Naive thymus-derived CD4-positive, alpha-beta T cell (primary cell): ENCODE measurements at regions of chr1 and their contacts with region 1.

Region 1: DNA sequence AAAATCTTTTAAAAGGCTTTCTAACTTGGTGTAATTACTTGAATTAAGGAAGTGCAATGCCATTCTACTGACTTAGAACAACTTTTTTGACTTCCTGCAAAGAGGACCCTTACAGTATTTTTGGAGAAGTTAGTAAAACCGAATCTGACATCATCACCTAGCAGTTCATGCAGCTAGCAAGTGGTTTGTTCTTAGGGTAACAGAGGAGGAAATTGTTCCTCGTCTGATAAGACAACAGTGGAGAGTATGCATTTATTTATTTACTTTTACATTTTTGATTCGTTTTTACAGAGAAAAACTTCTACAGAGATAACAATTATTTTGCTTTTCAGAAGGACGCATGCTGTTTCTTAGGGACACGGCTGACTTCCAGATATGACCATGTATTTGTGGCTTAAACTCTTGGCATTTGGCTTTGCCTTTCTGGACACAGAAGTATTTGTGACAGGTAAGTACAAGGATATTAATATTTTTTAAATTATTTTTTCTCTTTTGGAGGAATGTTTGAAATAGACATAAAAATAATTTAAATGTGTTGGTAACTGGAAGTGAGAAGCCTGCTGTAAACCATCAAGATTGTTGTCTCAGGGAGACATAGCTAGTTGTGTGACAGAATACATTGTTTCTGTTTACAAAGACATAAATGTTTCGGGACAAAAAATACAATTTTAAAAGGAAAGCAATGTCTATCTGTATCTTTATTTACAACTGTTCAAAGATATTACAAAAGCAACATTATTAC is at the start of gene PTPRC:
- DNase-seq: peak in 7 of 9 donors; percentile 46 to 78 (median 68)
- ATAC-seq: peak; percentile 81
- H3K4me3 ChIP-seq: peak within 1 kb of the TSS; percentile 81
- H3K4me3 Mint-ChIP-seq: peak within 1 kb of the TSS; percentile 77 to 100 (median 92)
- H3K27ac ChIP-seq: peak within 1 kb of the TSS; percentile 94
- H3K27ac Mint-ChIP-seq: peak within 1 kb of the TSS; percentile 86 to 98 (median 96)
- H3K4me1 ChIP-seq: peaks cover 31 to 40% of the 10 kb centered on the region in 2 donors
- H3K4me1 Mint-ChIP-seq: peaks cover 39 to 60% (median 52%) of the 10 kb centered on the region in 7 donors
- H3K27me3 ChIP-seq: no peaks in the 10 kb centered on the region
- H3K27me3 Mint-ChIP-seq: no peaks in the 10 kb centered on the region
- total RNA-seq, gene PTPRC: 739 to 1,121 (median 1,015) TPM

Region 2: GRCh38 chr1:198497346-198498102 is 141.5 kb before region 1 on chr1:
- CTCF ChIA-PET with region 1: no interaction called
- POLR2A ChIA-PET with region 1: no interaction called
- intact Hi-C with region 1: no loop called
- DNase-seq: no peak
- ATAC-seq: no peak
- H3K4me3 ChIP-seq: no peak overlapping the region
- H3K4me3 Mint-ChIP-seq: no peak overlapping the region
- H3K27ac ChIP-seq: no peak overlapping the region
- H3K27ac Mint-ChIP-seq: no peak overlapping the region
- H3K4me1 ChIP-seq: no peaks in the 10 kb centered on the region
- H3K4me1 Mint-ChIP-seq: peaks cover 0 to 10% (median 0%) of the 10 kb centered on the region in 7 donors
- H3K27me3 ChIP-seq: no peaks in the 10 kb centered on the region
- H3K27me3 Mint-ChIP-seq: no peaks in the 10 kb centered on the region

Region 3: GRCh38 chr1:198520524-198521254 is 118.4 kb before region 1 on chr1:
- CTCF ChIA-PET with region 1: interaction called, 4 read pairs
- POLR2A ChIA-PET with region 1: interaction called, 8 read pairs
- intact Hi-C with region 1: loop called (anchors 1 kb)
- DNase-seq: peak in 3 of 9 donors; percentile 11 to 27 (median 18)
- ATAC-seq: peak; percentile 66
- H3K4me3 ChIP-seq: peak overlapping the region; percentile 44
- H3K4me3 Mint-ChIP-seq: peak overlapping the region; percentile 65 to 79 (median 71)
- H3K27ac ChIP-seq: peak overlapping the region; percentile 81
- H3K27ac Mint-ChIP-seq: peak overlapping the region; percentile 48 to 95 (median 93)
- H3K4me1 ChIP-seq: peaks cover 40 to 48% of the 10 kb centered on the region in 2 donors
- H3K4me1 Mint-ChIP-seq: peaks cover 30 to 77% (median 69%) of the 10 kb centered on the region in 7 donors
- H3K27me3 ChIP-seq: no peaks in the 10 kb centered on the region
- H3K27me3 Mint-ChIP-seq: no peaks in the 10 kb centered on the region

Region 4: GRCh38 chr1:198556971-198557370 is 82.1 kb before region 1 on chr1:
- CTCF ChIA-PET with region 1: interaction called, 3 read pairs
- POLR2A ChIA-PET with region 1: interaction called, 6 read pairs
- intact Hi-C with region 1: loop called in 1 of 2 experiments (anchors 1 kb)
- DNase-seq: peak; percentile 12 to 90 (median 82)
- ATAC-seq: peak; percentile 95
- H3K4me3 ChIP-seq: peak overlapping the region; percentile 21
- H3K4me3 Mint-ChIP-seq: peak overlapping the region; percentile 63 to 89 (median 74)
- H3K27ac ChIP-seq: peak overlapping the region; percentile 59
- H3K27ac Mint-ChIP-seq: peak overlapping the region; percentile 51 to 95 (median 87)
- H3K4me1 ChIP-seq: peaks cover 65 to 71% of the 10 kb centered on the region in 2 donors
- H3K4me1 Mint-ChIP-seq: peaks cover 52 to 94% (median 89%) of the 10 kb centered on the region in 7 donors
- H3K27me3 ChIP-seq: no peaks in the 10 kb centered on the region
- H3K27me3 Mint-ChIP-seq: no peaks in the 10 kb centered on the region

Region 5: DNA sequence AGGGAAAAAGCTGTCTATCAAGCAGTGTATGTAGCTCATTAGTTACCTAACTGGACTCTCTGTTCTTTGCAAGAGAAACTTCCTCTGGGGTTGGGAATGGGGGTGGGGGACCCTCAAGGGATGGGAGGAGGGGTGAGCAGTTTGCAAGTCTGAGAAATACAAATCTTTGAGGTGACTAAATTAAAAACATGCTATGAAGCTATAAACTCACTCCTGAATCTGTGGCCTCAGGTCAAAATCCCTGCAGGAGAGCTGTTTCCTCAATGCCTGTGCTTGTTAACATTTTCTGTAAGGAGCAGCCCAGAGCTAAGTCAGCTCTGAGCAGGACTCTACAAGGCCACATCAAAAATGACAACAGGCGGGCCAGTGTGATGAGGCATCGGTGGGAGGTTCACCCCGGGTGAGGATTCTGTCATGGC is 33.0 kb before region 1 on chr1:
- CTCF ChIA-PET with region 1: interaction called, 4 read pairs
- POLR2A ChIA-PET with region 1: interaction called, 21 read pairs
- intact Hi-C with region 1: no loop called
- DNase-seq: no peak
- ATAC-seq: no peak
- H3K4me3 ChIP-seq: no peak overlapping the region
- H3K4me3 Mint-ChIP-seq: peak overlapping the region in 4 of 10 donors; percentile 3 to 60 (median 32)
- H3K27ac ChIP-seq: no peak overlapping the region
- H3K27ac Mint-ChIP-seq: peak overlapping the region; percentile 25 to 96 (median 76)
- H3K4me1 ChIP-seq: peaks cover 18 to 64% of the 10 kb centered on the region in 2 donors
- H3K4me1 Mint-ChIP-seq: peaks cover 36 to 88% (median 73%) of the 10 kb centered on the region in 7 donors
- H3K27me3 ChIP-seq: no peaks in the 10 kb centered on the region
- H3K27me3 Mint-ChIP-seq: no peaks in the 10 kb centered on the region

Region 6: DNA sequence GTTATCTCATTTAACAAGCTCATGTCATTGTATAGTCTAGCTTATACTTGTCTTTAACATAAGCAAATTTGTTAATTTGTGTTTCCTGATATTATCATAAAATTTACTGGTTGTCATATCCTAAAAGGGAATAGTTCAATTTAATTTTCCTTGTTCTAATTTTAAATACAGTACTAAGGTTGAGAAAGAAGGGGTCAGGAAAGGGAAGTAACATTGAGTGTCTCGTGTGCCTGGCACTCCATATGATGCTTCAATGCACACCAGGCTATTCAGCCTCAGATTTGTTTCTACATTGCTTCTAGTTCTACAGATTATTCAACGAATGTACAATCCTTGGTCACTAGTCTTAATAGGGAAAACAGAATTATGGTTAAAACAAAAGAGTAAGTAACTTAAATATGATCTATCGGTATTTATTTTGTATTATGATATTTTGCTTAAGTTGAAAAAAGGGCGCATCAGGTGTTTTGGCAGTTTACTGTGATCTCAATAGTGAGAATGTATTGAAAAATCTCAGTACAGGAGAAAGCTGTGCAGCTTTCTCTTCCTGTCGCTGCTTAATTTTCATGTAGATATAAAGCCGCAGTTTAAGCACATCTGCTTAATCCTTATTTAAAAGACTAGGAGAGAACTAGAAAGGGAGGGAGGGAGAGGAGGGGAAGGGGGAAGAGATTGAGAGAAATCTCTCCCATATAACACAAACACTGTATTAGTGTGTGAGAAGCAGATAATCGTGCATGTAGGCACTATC is 12.8 kb after region 1 on chr1:
- CTCF ChIA-PET with region 1: interaction called, 4 read pairs
- POLR2A ChIA-PET with region 1: interaction called, 53 read pairs
- intact Hi-C with region 1: loop called (anchors 1 kb)
- DNase-seq: no peak
- ATAC-seq: peak; percentile 34
- H3K4me3 ChIP-seq: peak overlapping the region; percentile 41
- H3K4me3 Mint-ChIP-seq: peak overlapping the region; percentile 77 to 92 (median 84)
- H3K27ac ChIP-seq: peak overlapping the region; percentile 94
- H3K27ac Mint-ChIP-seq: peak overlapping the region; percentile 83 to 98 (median 98)
- H3K4me1 ChIP-seq: peaks cover 62% of the 10 kb centered on the region in 2 donors
- H3K4me1 Mint-ChIP-seq: peaks cover 47 to 93% (median 73%) of the 10 kb centered on the region in 7 donors
- H3K27me3 ChIP-seq: no peaks in the 10 kb centered on the region
- H3K27me3 Mint-ChIP-seq: no peaks in the 10 kb centered on the region

Region 7: GRCh38 chr1:198669023-198669698 is 30.1 kb after region 1 on chr1:
- CTCF ChIA-PET with region 1: interaction called, 3 read pairs
- POLR2A ChIA-PET with region 1: interaction called, 5 read pairs
- intact Hi-C with region 1: loop called in 1 of 2 experiments (anchors 1 kb)
- DNase-seq: peak in 2 of 9 donors; percentile 46 to 53
- ATAC-seq: peak; percentile 81
- H3K4me3 ChIP-seq: peak overlapping the region; percentile 2
- H3K4me3 Mint-ChIP-seq: peak overlapping the region; percentile 48 to 78 (median 71)
- H3K27ac ChIP-seq: peak overlapping the region; percentile 75
- H3K27ac Mint-ChIP-seq: peak overlapping the region; percentile 74 to 98 (median 91)
- H3K4me1 ChIP-seq: peaks cover 79 to 86% of the 10 kb centered on the region in 2 donors
- H3K4me1 Mint-ChIP-seq: peaks cover 61 to 100% (median 95%) of the 10 kb centered on the region in 7 donors
- H3K27me3 ChIP-seq: no peaks in the 10 kb centered on the region
- H3K27me3 Mint-ChIP-seq: no peaks in the 10 kb centered on the region

Region 8: DNA sequence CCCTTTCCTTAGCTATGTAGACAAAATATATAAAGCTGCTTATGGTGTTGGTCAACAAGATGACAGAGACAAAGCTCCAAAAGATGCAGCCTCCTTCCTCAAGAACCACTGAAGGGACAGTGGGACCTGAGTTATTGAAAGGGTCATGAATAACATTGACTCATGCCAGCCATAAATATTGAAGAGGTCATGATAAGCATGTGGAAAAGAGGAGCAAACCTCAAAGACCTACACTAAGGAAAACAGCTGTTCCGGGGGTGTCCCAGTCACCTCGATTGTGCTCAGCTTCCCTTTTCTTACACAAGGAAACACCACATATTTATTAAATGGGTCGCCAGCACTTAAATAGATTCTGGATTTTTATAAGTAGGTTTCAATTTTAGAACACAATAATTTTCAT is 112.7 kb after region 1 on chr1:
- CTCF ChIA-PET with region 1: no interaction called
- POLR2A ChIA-PET with region 1: no interaction called
- intact Hi-C with region 1: no loop called
- DNase-seq: no peak
- ATAC-seq: no peak
- H3K4me3 ChIP-seq: no peak overlapping the region
- H3K4me3 Mint-ChIP-seq: no peak overlapping the region
- H3K27ac ChIP-seq: peak overlapping the region; percentile 23
- H3K27ac Mint-ChIP-seq: peak overlapping the region in 8 of 9 donors; percentile 38 to 86 (median 72)
- H3K4me1 ChIP-seq: no peaks in the 10 kb centered on the region
- H3K4me1 Mint-ChIP-seq: peaks cover 6 to 39% (median 15%) of the 10 kb centered on the region in 7 donors
- H3K27me3 ChIP-seq: no peaks in the 10 kb centered on the region
- H3K27me3 Mint-ChIP-seq: no peaks in the 10 kb centered on the region